ENCODE measurements at regions of chr17 and their contacts with region 1.

Region 1: DNA sequence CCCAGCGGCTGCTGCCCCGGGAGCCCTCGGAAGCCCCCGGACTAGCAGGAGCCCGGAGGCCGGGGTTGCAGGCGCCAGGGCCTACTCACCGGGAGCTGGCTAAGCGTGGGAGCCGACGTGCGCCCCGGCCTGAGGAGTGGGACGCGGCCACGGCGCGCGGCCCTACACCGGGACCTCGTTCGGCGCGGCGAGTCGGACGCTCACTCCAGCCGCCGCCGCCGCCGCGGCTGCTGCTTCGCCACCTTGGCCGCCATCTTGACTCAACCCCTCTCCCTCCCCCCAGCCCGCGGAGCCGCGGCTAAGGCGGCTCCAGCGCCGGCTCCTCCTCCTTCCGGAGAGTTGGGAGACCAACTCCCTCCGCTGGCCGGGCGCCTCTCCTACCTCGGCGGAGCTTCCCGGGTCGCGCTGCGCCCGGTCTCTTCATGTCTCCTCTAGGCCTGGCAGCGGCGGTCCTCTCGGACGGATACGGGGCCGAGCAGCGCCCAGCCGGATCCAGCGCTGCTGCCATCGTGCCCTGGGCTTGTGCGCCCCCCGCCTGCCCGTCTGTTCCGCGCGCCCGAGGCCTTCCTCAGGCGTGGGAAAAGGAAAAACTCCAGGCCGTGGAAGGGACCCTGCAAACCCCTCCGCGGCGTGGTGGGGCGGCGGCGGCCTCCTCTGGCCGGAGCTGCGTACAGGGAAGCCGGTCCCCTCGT is at the start of gene NCOR1:
- DNase-seq: peak; percentile 85
- ATAC-seq: peak; percentile 90
- H3K4me3 ChIP-seq: peak within 1 kb of the TSS; percentile 84 to 91 (median 88)
- H3K27ac ChIP-seq: peak within 1 kb of the TSS; percentile 99
- H3K4me1 ChIP-seq: peaks cover 43% of the 10 kb centered on the region
- H3K27me3 ChIP-seq: no peaks in the 10 kb centered on the region; a peak in 1 of 5 replicates
- CTCF ChIP-seq: peak; percentile 63
- EP300 ChIP-seq: 0 out of 4 replicates have a peak, but pooled peaks of 1 of the 2 experiments have one; percentile 10
- POLR2A ChIP-seq: peak; percentile 91 to 93
- RAD21 ChIP-seq: peak; percentile 60; the same call in 1 of the 2 replicates
- total RNA-seq, gene NCOR1: 57.0 and 80.4 TPM in 2 replicates

Region 2: GRCh38 chr17:16250635-16251034 is 35.2 kb after region 1 on chr17:
- CTCF ChIA-PET with region 1: no interaction called
- POLR2A ChIA-PET with region 1: interaction called, 16 read pairs
- in situ Hi-C with region 1: no loop called
- intact Hi-C with region 1: no loop called
- DNase-seq: peak; percentile 70
- ATAC-seq: peak; percentile 62
- H3K4me3 ChIP-seq: no peak overlapping the region
- H3K27ac ChIP-seq: peak overlapping the region; percentile 69
- H3K4me1 ChIP-seq: peaks cover 87% of the 10 kb centered on the region
- H3K27me3 ChIP-seq: no peaks in the 10 kb centered on the region
- CTCF ChIP-seq: no peak
- EP300 ChIP-seq: no peak; a peak in 1 of 4 replicates
- POLR2A ChIP-seq: no peak
- RAD21 ChIP-seq: no peak

Region 3: DNA sequence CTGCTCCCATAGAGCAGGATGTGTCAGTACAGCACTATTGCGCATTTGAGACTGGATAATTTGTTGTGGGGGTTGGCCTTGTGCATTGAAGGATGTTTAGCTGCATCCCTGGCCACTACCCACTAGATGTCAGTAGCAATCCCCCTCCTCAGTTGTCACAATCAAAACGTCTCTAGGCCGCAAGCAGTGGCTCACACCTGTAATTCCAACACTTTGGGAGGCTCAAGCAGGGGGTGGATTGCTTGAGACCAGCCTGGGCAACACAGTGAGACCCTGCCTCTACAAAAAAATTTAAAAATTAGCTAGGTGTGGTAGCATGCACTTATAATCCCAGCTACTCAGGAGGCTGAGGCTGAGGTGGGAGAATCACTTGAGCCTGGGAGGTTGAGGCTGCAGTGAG is 89.4 kb after region 1 on chr17:
- CTCF ChIA-PET with region 1: no interaction called
- POLR2A ChIA-PET with region 1: interaction called, 37 read pairs
- in situ Hi-C with region 1: no loop called
- intact Hi-C with region 1: no loop called
- DNase-seq: peak; percentile 63
- ATAC-seq: peak; percentile 86
- H3K4me3 ChIP-seq: no peak overlapping the region
- H3K27ac ChIP-seq: no peak overlapping the region
- H3K4me1 ChIP-seq: peaks cover 79% of the 10 kb centered on the region
- H3K27me3 ChIP-seq: no peaks in the 10 kb centered on the region
- CTCF ChIP-seq: peak; percentile 86
- EP300 ChIP-seq: no peak
- POLR2A ChIP-seq: no peak
- RAD21 ChIP-seq: peak; percentile 88